ENCODE measurements at regions of chr3 and their contacts with region 1.

Region 1: DNA sequence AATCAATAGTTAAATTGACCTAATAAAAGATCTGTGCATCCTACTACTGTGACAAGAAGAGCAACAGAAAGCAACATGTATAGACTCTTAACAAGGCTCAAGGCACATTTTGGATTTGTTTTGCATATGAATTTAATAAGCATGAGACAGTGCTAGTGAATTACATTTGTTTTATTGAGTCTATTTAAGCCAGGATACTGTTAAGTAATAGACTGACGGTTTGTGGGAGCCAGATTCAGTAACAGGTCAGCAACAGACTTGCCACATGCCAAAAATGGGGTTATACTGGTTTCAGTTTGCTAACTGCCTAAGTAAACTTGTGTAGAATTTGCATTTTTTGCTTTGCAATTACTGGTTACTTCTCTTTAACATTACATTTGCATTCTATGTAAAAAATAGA is 54.0 kb downstream of the MBNL1 start:
- DNase-seq: peak in 2 of 9 experiments; percentile 59 to 71
- ATAC-seq: peak; percentile 24
- H3K4me3 ChIP-seq: no peak overlapping the region
- H3K4me3 Mint-ChIP-seq: peak overlapping the region; percentile 62
- H3K27ac ChIP-seq: peak overlapping the region in 1 of 2 experiments; percentile 55
- H3K27ac Mint-ChIP-seq: peak overlapping the region; percentile 78
- H3K4me1 ChIP-seq: peaks cover 77% of the 10 kb centered on the region
- H3K4me1 Mint-ChIP-seq: peaks cover 83% of the 10 kb centered on the region
- H3K27me3 ChIP-seq: no peaks in the 10 kb centered on the region
- H3K27me3 Mint-ChIP-seq: no peaks in the 10 kb centered on the region
- CTCF ChIP-seq: no peak

Region 2: DNA sequence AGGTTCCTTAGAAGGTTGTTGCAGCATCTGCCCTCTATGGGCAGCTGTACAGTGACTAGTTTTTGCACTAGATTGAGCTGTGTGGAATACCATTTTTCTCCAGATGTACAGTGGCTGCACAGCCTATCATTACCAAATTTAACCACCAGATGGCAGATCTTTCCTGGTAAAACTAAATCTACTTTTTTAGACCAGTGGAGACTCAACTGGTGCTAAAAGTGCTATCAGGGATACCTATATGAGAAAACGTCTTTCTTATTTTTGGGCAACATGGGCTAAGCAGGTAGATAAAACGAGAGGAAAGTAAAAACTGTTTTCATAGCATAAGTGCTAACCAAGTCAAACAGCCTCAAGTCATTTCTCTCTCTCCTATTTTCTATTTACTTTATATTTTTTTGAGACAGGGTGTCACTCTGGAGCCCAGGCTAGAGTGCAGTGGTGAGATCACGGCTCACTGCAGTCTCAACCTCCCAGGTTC is 883.1 kb before region 1 on chr3:
- CTCF ChIA-PET with region 1: no interaction called
- POLR2A ChIA-PET with region 1: no interaction called
- intact Hi-C with region 1: no loop called
- DNase-seq: peak in 2 of 9 experiments; percentile 43 to 52
- ATAC-seq: no peak
- H3K4me3 ChIP-seq: no peak overlapping the region
- H3K4me3 Mint-ChIP-seq: no peak overlapping the region
- H3K27ac ChIP-seq: no peak overlapping the region
- H3K27ac Mint-ChIP-seq: no peak overlapping the region
- H3K4me1 ChIP-seq: no peaks in the 10 kb centered on the region
- H3K4me1 Mint-ChIP-seq: no peaks in the 10 kb centered on the region
- H3K27me3 ChIP-seq: peaks cover 0 to 4% of the 10 kb centered on the region in 2 experiments
- H3K27me3 Mint-ChIP-seq: peaks cover 5% of the 10 kb centered on the region
- CTCF ChIP-seq: peak; percentile 62

Region 3: DNA sequence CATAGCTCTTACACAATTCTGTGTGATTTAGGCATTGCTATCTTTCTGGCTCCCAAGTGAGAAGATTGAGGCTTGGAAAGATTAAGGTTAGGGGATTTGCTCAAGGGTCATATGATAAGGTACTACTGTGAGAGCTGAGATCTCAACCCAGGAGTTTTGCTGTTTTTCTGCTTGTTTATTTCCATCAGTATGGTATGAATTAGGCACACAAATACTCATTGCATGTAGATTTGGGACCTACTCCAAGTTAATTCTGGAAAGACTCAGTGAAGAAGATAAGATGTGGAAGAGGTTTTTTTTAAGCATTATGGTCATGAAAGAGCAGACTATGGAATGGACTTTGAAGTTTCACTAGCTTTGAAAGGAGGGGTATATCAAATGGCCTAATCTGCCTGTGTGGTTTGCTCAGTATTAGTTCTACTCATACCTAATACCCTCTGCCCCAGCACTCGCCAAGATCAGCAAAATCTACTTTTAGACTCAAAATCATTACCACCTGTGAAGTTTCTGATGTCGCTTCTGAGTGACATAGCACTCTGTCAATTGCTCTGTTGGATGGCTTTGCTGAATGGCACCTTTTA is 41.5 kb before region 1 on chr3:
- CTCF ChIA-PET with region 1: no interaction called
- POLR2A ChIA-PET with region 1: interaction called, 4 read pairs
- intact Hi-C with region 1: loop called in 1 of 2 experiments (anchors 5 kb)
- DNase-seq: peak in 1 of 9 experiments; percentile 41
- ATAC-seq: no peak
- H3K4me3 ChIP-seq: peak overlapping the region in 1 of 2 experiments; percentile 14
- H3K4me3 Mint-ChIP-seq: peak overlapping the region; percentile 63
- H3K27ac ChIP-seq: peak overlapping the region in 1 of 2 experiments; percentile 69
- H3K27ac Mint-ChIP-seq: peak overlapping the region; percentile 87
- H3K4me1 ChIP-seq: peaks cover 88% of the 10 kb centered on the region
- H3K4me1 Mint-ChIP-seq: peaks cover 84% of the 10 kb centered on the region
- H3K27me3 ChIP-seq: no peaks in the 10 kb centered on the region
- H3K27me3 Mint-ChIP-seq: no peaks in the 10 kb centered on the region
- CTCF ChIP-seq: no peak

Region 4: GRCh38 chr3:152309535-152310307 is 13.0 kb before region 1 on chr3:
- CTCF ChIA-PET with region 1: interaction called, 3 read pairs
- POLR2A ChIA-PET with region 1: interaction called, 7 read pairs
- intact Hi-C with region 1: loop called in 1 of 2 experiments (anchors 1 kb)
- DNase-seq: peak in 2 of 9 experiments; percentile 40 to 57
- ATAC-seq: peak; percentile 89
- H3K4me3 ChIP-seq: no peak overlapping the region
- H3K4me3 Mint-ChIP-seq: peak overlapping the region; percentile 20
- H3K27ac ChIP-seq: peak overlapping the region in 1 of 2 experiments; percentile 56
- H3K27ac Mint-ChIP-seq: peak overlapping the region; percentile 84
- H3K4me1 ChIP-seq: peaks cover 72% of the 10 kb centered on the region
- H3K4me1 Mint-ChIP-seq: peaks cover 80% of the 10 kb centered on the region
- H3K27me3 ChIP-seq: no peaks in the 10 kb centered on the region
- H3K27me3 Mint-ChIP-seq: no peaks in the 10 kb centered on the region
- CTCF ChIP-seq: no peak

Measured in CD8-positive, alpha-beta T cell (primary cell).